ENCODE measurements at regions of chr11 and their contacts with region 1.

Region 1: DNA sequence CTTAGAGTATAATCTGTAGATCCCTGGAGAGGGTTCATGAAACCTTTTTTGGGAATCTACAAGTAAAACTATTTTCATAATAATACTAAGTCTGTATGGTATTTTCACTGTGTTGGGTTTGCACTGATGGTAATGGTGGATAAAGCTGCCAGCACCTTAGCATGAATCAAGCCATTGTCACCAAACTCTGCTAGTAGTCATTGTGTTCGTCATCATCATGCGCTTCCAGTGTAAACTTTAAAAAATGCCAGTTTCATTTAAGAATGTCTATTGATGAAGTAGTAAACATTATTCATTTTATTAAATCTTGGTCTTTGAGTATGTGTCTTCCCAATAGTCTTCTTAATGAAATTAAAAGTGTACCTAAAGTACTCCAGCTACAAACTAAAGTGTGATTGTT is 15.0 kb downstream of the ALKBH3 start:
- DNase-seq: no peak
- H3K4me3 ChIP-seq: no peak overlapping the region
- H3K27ac ChIP-seq: no peak overlapping the region
- H3K4me1 ChIP-seq: peaks cover 0 to 18% of the 10 kb centered on the region in 2 experiments; a peak in 2 of 4 replicates
- H3K27me3 ChIP-seq: no peaks in the 10 kb centered on the region
- CTCF ChIP-seq: no peak
- EP300 ChIP-seq: no peak
- RAD21 ChIP-seq: no peak

Region 2: DNA sequence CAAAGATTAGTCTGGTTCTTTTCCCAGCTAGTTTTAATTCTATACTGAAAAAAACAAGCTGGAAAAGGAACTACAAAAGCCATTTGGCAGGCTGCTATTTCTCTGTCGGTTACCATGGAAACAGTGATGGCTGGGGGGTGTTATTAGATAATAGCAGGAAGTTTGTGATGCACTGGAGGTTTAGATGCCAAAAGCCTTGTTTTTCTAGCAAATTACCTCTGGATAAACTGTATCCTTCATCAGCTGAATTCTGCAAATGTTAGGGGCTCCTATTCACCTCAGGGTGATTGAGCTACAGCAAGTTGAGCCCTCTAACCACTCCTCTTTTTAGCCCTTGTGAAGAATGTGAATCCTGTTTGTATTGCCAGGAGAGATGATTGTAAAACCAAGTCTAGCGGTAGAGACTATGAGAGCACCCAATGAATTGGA is 10.2 kb after region 1 on chr11:
- CTCF ChIA-PET with region 1: interaction called, 13 read pairs
- POLR2A ChIA-PET with region 1: interaction called, 5 read pairs
- DNase-seq: peak; percentile 73
- H3K4me3 ChIP-seq: no peak overlapping the region
- H3K27ac ChIP-seq: peak overlapping the region; percentile 51 to 100
- H3K4me1 ChIP-seq: peaks cover 0 to 50% of the 10 kb centered on the region in 2 experiments; a peak in 2 of 4 replicates
- H3K27me3 ChIP-seq: no peaks in the 10 kb centered on the region
- CTCF ChIP-seq: no peak
- EP300 ChIP-seq: peak in 1 of 2 experiments; percentile 96; a peak in 2 of 4 replicates
- RAD21 ChIP-seq: peak; percentile 14; the same call in 1 of the 2 replicates

Region 3: GRCh38 chr11:43925932-43926505 is 30.4 kb after region 1 on chr11:
- CTCF ChIA-PET with region 1: interaction called, 54 read pairs
- POLR2A ChIA-PET with region 1: interaction called, 6 read pairs
- DNase-seq: peak; percentile 87
- H3K4me3 ChIP-seq: no peak overlapping the region
- H3K27ac ChIP-seq: peak overlapping the region; percentile 32 to 100; a peak in 3 of 4 replicates
- H3K4me1 ChIP-seq: peaks cover 0 to 85% of the 10 kb centered on the region in 2 experiments; a peak in 3 of 4 replicates
- H3K27me3 ChIP-seq: no peaks in the 10 kb centered on the region
- CTCF ChIP-seq: no peak
- EP300 ChIP-seq: peak in 1 of 2 experiments; percentile 96; a peak in 2 of 4 replicates
- RAD21 ChIP-seq: no peak; the same call in none of the 2 replicates

Region 4: GRCh38 chr11:43944761-43945311 is 49.2 kb after region 1 on chr11:
- CTCF ChIA-PET with region 1: interaction called, 216 read pairs
- POLR2A ChIA-PET with region 1: interaction called, 80 read pairs
- DNase-seq: peak; percentile 72
- H3K4me3 ChIP-seq: peak overlapping the region; percentile 26 to 53; a peak in 3 of 4 replicates
- H3K27ac ChIP-seq: peak overlapping the region in 1 of 2 experiments; percentile 93; a peak in 2 of 4 replicates
- H3K4me1 ChIP-seq: peaks cover 5 to 46% of the 10 kb centered on the region in 2 experiments; a peak in 3 of 4 replicates
- H3K27me3 ChIP-seq: peaks cover 62% of the 10 kb centered on the region
- CTCF ChIP-seq: peak; percentile 74
- EP300 ChIP-seq: no peak
- RAD21 ChIP-seq: peak; percentile 62

Region 5: GRCh38 chr11:44002191-44003093 is 106.8 kb after region 1 on chr11:
- CTCF ChIA-PET with region 1: interaction called, 14 read pairs
- POLR2A ChIA-PET with region 1: no interaction called
- DNase-seq: no peak
- H3K4me3 ChIP-seq: no peak overlapping the region
- H3K27ac ChIP-seq: no peak overlapping the region
- H3K4me1 ChIP-seq: peaks cover 0 to 21% of the 10 kb centered on the region in 2 experiments; a peak in 1 of 4 replicates
- H3K27me3 ChIP-seq: no peaks in the 10 kb centered on the region
- CTCF ChIP-seq: no peak
- EP300 ChIP-seq: no peak
- RAD21 ChIP-seq: no peak

Region 6: DNA sequence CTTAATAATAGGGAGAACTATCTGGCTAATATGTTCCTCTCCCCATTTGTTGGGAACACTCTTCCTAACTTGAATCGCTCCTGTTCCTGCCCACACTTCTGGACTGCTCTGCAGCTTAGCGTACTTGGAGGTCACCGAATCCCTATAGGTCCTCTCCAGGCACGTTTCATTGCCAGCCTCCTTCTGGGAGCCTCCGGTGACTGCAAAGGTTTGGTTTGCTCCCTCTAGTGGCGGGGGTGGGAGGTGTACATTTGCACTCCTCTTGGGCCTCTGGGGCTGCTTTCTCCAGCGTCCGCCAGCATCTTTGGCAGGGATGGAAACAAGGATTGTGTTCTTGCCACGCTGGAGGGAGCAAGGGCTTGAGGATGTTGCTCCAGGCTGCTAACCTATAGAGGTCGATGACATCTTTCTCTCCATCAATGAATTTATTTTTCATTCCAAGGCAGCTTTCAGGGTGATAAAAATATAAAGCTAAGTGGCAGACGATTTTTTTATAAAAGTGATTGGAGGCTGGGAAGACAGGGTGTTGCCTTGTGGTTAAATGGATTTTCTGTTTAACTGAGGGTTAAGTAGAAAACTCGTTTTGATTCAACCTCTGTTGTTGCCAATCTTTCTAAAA is 879.9 kb after region 1 on chr11:
- CTCF ChIA-PET with region 1: no interaction called
- POLR2A ChIA-PET with region 1: no interaction called
- DNase-seq: peak; percentile 53
- H3K4me3 ChIP-seq: no peak overlapping the region
- H3K27ac ChIP-seq: peak overlapping the region in 1 of 2 experiments; percentile 99; a peak in 3 of 4 replicates
- H3K4me1 ChIP-seq: peaks cover 21 to 77% of the 10 kb centered on the region in 2 experiments; a peak in 3 of 4 replicates
- H3K27me3 ChIP-seq: no peaks in the 10 kb centered on the region
- CTCF ChIP-seq: peak; percentile 74
- EP300 ChIP-seq: no peak
- RAD21 ChIP-seq: peak; percentile 50

Measured in SK-N-SH (cell line).